ENCODE measurements at regions of chr12 and their contacts with region 1.

Region 1: DNA sequence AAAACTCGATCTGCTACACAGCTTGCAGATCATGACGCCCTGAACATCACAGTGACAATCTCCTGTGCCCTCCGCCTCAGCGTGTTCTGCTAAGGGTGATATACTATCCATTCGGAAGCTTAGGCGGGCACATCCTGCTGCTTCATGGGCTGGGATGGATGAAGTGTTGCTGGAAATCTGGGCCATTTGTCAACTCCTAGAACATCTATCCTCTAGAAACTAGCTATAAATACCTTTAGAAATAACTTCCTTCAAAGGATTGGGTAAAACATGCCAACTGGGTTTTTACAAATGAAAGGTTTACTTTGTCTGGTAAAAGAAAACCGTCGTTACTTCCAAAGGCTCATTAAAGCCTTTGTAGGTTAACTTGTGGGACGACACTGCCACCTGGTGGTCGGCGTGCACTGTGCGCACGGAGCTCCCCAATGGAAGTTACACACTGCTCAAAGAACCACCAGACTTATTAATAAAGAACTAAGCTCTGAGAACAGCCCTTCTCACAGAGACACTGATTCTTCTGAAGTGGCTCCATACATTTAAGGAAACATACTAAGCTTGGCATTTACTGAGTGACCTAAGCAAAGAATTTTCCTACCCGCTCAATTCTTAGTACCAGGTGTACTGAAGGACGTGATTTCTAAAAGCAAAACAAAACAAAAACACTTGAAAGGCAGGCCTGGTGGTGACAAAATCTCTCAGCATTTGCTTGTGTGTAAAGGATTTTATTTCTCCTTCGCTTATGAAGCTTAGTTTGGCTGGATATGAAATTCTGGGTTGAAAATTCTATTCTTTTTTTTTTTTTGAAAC is 21.6 kb upstream of the CACNA2D4 start:
- DNase-seq: peak; percentile 89
- ATAC-seq: peak; percentile 91
- H3K4me3 Mint-ChIP-seq: no peak overlapping the region; the same call in 1 of the 2 replicates
- H3K27ac Mint-ChIP-seq: no peak overlapping the region
- H3K4me1 Mint-ChIP-seq: peaks cover 4% of the 10 kb centered on the region
- H3K27me3 Mint-ChIP-seq: no peaks in the 10 kb centered on the region
- CTCF ChIP-seq: peak; percentile 93

Region 2: GRCh38 chr12:1634590-1635191 is 305.3 kb before region 1 on chr12:
- CTCF ChIA-PET with region 1: interaction called, 41 read pairs
- POLR2A ChIA-PET with region 1: no interaction called
- DNase-seq: peak; percentile 83
- ATAC-seq: peak; percentile 74
- H3K4me3 Mint-ChIP-seq: no peak overlapping the region
- H3K27ac Mint-ChIP-seq: no peak overlapping the region
- H3K4me1 Mint-ChIP-seq: peaks cover 34% of the 10 kb centered on the region
- H3K27me3 Mint-ChIP-seq: peaks cover 48% of the 10 kb centered on the region
- CTCF ChIP-seq: peak; percentile 41; the same call in 1 of the 2 replicates

Region 3: DNA sequence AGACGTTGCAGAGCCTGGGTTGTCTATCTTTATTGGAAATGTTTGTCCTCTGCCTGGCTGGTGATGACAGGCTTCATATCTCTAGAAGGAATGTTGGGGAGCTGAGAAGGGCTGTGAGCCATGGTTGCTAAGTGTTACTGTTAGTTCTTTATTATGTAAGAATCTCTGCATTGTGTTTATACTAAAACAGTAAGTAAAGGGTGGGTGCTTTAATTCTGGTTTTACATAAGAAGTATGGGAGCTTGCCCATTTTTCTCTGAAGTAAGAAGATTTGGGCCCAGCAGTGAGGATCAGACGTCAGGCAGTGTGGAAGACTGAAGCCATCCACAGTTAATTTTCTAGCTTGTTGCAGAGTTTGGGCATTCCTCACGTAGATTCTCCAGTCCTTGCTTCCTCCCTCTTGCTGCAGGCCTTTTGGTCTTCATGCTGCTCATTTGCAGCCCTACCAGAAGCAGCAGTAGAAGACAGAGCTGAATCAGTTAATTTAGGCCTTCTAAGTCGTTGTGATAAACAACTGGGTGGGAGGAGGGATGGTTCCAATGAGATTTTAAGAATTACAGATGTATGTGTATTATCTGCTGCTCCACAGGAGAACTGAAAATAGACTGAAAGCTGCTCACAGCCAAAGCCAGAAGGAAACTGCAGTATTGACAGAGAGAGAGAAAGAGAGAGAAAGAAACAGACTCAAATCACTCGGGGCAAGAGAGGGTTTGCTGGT is 289.6 kb before region 1 on chr12:
- CTCF ChIA-PET with region 1: interaction called, 29 read pairs
- POLR2A ChIA-PET with region 1: no interaction called
- DNase-seq: no peak
- ATAC-seq: no peak
- H3K4me3 Mint-ChIP-seq: no peak overlapping the region
- H3K27ac Mint-ChIP-seq: no peak overlapping the region
- H3K4me1 Mint-ChIP-seq: peaks cover 12% of the 10 kb centered on the region
- H3K27me3 Mint-ChIP-seq: no peaks in the 10 kb centered on the region
- CTCF ChIP-seq: no peak

Region 4: DNA sequence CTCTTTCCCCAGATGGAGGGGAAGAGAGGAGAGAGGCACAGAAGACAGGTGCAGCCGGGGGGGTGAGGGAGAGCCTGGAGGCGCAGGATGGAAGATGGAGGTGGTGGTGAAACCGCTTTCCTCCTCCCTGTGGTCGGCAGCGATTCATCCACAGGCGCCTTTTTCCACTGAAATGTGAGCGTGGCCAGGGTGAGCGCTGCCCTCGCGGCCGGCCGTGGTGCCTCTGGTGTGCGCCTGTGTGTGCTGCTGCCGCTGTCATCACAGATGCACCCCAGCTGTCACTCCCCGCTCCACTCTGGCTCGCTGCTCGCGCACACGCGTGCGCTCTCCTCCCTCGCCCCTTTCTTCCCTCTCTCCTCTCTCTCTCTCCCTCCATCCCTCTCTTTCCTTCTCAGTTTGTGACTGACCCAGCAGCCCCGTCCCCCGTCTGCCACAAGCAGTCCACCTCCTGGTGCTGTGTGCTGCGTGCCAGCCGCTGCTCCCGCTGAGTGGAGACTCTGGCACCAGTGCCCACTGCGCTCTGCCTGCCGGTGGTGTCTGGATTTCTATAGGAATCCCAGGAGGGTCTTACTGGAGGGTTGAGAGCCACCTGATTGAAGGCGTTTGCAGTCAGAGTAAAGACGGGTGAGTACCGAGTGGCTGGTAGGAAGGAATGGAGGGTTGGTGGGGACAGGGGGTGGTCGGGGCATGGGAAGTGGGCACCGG is 119.7 kb before region 1 on chr12 and contains the start of gene LRTM2:
- CTCF ChIA-PET with region 1: interaction called, 26 read pairs
- POLR2A ChIA-PET with region 1: no interaction called
- DNase-seq: no peak
- ATAC-seq: peak; percentile 42
- H3K4me3 Mint-ChIP-seq: peak within 1 kb of the TSS; percentile 72
- H3K27ac Mint-ChIP-seq: no peak within 1 kb of the TSS
- H3K4me1 Mint-ChIP-seq: peaks cover 18% of the 10 kb centered on the region
- H3K27me3 Mint-ChIP-seq: peaks cover 35% of the 10 kb centered on the region
- CTCF ChIP-seq: no peak
- total RNA-seq, gene LRTM2: 0.30 to 0.66 TPM (median 0.34 TPM) in 3 replicates

Region 5: DNA sequence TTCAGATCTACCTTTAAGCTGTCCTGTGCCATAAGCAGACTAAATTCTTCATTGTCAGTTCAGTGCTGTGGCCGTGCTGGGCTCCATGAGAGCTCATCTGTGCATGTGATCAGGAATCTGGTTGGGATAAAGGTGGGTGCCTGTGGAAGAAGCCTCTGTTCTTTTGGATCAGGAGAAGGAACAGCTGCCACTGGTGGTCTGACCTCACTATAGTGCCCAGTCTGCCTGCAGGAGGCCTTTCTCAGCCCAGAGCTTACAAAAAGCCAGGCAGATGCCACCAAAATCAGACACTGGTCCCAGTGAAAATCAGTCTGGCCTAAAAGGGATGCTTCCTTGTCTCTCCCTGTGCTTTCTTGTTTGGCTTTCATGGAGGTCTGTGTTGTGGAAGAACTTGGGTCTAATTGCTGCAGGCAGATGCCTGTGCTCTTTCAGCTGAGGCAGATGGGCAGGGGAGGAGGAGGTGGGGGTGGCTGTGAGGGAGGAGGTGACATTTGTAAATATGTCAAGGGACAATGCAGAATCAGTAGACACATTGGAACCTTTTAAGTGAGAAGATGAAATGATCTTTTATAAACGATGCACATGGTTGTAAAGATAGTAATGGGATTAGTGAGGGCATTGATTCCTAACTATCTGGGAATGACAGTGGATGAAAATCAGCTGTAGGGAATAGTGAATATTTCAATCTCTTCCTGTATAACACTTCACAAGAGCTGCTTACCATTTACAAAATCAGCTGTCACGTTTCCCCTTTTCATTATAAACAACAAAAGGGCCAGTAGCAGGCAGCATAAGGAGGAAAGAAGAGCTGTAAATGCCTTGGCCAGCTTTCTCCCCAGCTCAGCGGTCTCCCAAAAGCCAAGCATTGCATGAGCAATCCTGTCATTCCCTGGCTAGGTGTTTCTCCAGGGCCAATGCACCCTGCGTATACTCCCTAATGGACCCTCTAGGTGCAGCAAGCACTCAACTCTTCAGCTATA is 66.2 kb before region 1 on chr12:
- CTCF ChIA-PET with region 1: interaction called, 12 read pairs
- POLR2A ChIA-PET with region 1: no interaction called
- DNase-seq: no peak
- ATAC-seq: no peak
- H3K4me3 Mint-ChIP-seq: no peak overlapping the region
- H3K27ac Mint-ChIP-seq: no peak overlapping the region
- H3K4me1 Mint-ChIP-seq: no peaks in the 10 kb centered on the region
- H3K27me3 Mint-ChIP-seq: no peaks in the 10 kb centered on the region; the same call in none of the 2 replicates
- CTCF ChIP-seq: no peak

Region 6: GRCh38 chr12:1929241-1929984 is 10.6 kb before region 1 on chr12:
- CTCF ChIA-PET with region 1: interaction called, 23 read pairs
- POLR2A ChIA-PET with region 1: no interaction called
- DNase-seq: no peak
- ATAC-seq: no peak
- H3K4me3 Mint-ChIP-seq: no peak overlapping the region
- H3K27ac Mint-ChIP-seq: no peak overlapping the region
- H3K4me1 Mint-ChIP-seq: no peaks in the 10 kb centered on the region
- H3K27me3 Mint-ChIP-seq: 0 out of 2 replicates have a peak, but pooled peaks cover under 1% of the 10 kb centered on the region
- CTCF ChIP-seq: no peak

Region 7: DNA sequence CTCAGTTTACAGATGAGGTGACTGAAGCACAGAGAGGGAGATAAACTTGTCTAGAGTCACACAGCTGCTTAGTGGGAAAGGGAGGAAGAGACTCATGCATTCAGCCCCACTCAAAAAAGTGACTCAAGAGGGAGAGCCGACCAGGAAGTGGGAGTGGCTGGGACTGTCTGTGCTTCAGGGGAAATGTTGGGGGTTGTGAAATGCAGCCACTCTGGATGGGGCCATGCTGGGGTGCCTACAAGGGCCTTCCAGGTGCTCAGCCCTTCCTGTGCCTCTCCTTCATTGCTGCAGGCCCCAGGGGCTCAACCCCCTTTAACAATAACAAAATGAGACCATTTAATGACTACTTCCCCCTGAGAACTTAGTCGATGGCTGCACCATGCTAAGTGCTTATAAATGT is 154.6 kb after region 1 on chr12:
- CTCF ChIA-PET with region 1: no interaction called
- POLR2A ChIA-PET with region 1: no interaction called
- DNase-seq: no peak
- ATAC-seq: no peak
- H3K4me3 Mint-ChIP-seq: no peak overlapping the region
- H3K27ac Mint-ChIP-seq: no peak overlapping the region; the same call in 1 of the 2 replicates
- H3K4me1 Mint-ChIP-seq: peaks cover 17% of the 10 kb centered on the region
- H3K27me3 Mint-ChIP-seq: no peaks in the 10 kb centered on the region
- CTCF ChIP-seq: no peak

Region 8: GRCh38 chr12:2588345-2588744 is 648.3 kb after region 1 on chr12:
- CTCF ChIA-PET with region 1: no interaction called
- POLR2A ChIA-PET with region 1: no interaction called
- DNase-seq: no peak
- ATAC-seq: peak; percentile 67
- H3K4me3 Mint-ChIP-seq: no peak overlapping the region
- H3K27ac Mint-ChIP-seq: no peak overlapping the region
- H3K4me1 Mint-ChIP-seq: peaks cover 21% of the 10 kb centered on the region
- H3K27me3 Mint-ChIP-seq: peaks cover 19% of the 10 kb centered on the region
- CTCF ChIP-seq: no peak